Activated naive CD4-positive, alpha-beta T cell treated with anti-CD3 and anti-CD28 coated beads for 36 hours (primary cell): ENCODE measurements at regions of chr3 and their contacts with region 1.

Region 1: DNA sequence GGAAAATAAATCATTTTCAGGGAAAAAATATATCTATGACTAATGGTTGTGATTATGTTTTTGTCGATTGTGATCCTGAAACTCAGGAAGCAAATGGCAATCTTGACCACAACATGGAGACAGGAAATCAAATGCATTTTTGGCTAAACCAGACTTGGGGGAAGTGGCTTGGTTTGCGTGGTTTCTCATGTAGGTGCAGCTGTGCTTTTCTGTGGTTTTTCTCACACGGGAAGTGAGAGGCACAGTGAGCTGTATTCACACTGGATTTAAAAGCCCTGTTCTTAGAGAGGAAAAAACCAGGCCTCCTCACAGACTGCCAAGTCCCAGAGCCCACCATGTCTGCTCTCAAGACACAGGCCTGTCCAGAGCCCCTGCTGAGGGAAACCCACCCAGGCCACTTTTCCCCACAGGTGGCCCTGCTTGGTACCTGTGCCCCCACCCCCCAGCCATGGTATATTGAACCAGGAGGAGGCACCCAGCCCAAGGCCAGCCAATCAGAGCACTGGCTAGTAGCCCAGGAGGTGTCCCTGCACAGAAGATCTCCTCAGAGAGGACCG is 46.1 kb downstream of the BTD start:
- DNase-seq: peak; percentile 87
- H3K4me3 Mint-ChIP-seq: peak overlapping the region; percentile 36
- H3K27ac Mint-ChIP-seq: peak overlapping the region; percentile 76
- H3K4me1 Mint-ChIP-seq: peaks cover 35% of the 10 kb centered on the region
- H3K27me3 Mint-ChIP-seq: peaks cover 4% of the 10 kb centered on the region

Region 2: GRCh38 chr3:15601397-15602145 is 46.1 kb before region 1 on chr3 and contains the starts of genes BTD and HACL1:
- CTCF ChIA-PET with region 1: no interaction called
- intact Hi-C with region 1: loop called (anchors 1 kb)
- DNase-seq: peak; percentile 99
- H3K4me3 Mint-ChIP-seq: peak within 1 kb of the TSS; percentile 99
- H3K27ac Mint-ChIP-seq: peak within 1 kb of the TSS; percentile 96
- H3K4me1 Mint-ChIP-seq: peaks cover 46% of the 10 kb centered on the region
- H3K27me3 Mint-ChIP-seq: no peaks in the 10 kb centered on the region
- total RNA-seq, gene BTD: 8.7 to 9.7 TPM
- total RNA-seq, gene HACL1: 25.3 to 26.5 TPM

Region 3: DNA sequence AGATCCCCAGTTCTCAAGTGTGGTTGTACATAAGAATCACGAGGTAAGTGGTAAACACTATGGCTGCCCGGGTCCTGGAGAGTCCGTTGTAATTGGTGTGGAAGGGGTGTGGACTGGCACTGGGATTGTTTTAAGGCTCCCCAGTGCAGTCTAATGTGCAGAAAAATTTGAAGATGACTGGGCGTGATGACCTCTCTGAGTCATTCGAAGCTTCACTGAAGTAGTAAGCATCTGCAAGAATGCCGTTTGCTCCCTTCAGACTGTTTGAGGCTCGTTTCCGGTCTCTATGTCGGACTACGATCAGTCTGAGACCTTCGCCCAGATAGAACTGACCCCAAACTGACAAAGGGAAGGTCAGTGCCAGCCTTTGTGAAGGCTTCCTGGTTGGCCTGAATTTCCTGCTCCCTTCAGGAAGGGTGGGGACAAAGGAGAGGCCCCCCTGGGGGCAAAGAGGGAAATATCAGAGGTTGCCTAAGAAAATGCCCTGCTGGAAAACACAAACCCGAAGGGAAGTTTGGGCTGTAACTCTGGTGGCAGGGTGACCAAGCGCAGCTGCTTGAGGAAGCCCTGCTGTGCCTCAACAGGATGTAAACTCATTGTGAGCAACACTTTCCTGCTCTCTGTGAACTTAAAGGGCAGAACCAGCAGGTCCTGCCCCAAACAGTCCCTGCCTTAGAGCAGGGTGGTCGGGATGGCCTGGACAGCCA is 11.5 kb before region 1 on chr3:
- CTCF ChIA-PET with region 1: interaction called, 5 read pairs
- intact Hi-C with region 1: loop called (anchors 1 kb)
- DNase-seq: peak; percentile 74
- H3K4me3 Mint-ChIP-seq: no peak overlapping the region
- H3K27ac Mint-ChIP-seq: peak overlapping the region; percentile 69
- H3K4me1 Mint-ChIP-seq: peaks cover 52% of the 10 kb centered on the region
- H3K27me3 Mint-ChIP-seq: no peaks in the 10 kb centered on the region

Region 4: GRCh38 chr3:15694628-15695027 is 46.9 kb after region 1 on chr3:
- CTCF ChIA-PET with region 1: no interaction called
- intact Hi-C with region 1: no loop called
- DNase-seq: no peak
- H3K4me3 Mint-ChIP-seq: no peak overlapping the region
- H3K27ac Mint-ChIP-seq: no peak overlapping the region
- H3K4me1 Mint-ChIP-seq: peaks cover 2% of the 10 kb centered on the region
- H3K27me3 Mint-ChIP-seq: no peaks in the 10 kb centered on the region

Region 5: GRCh38 chr3:15743587-15744009 is 95.9 kb after region 1 on chr3:
- CTCF ChIA-PET with region 1: no interaction called
- intact Hi-C with region 1: loop called (anchors 1 kb)
- DNase-seq: no peak
- H3K4me3 Mint-ChIP-seq: no peak overlapping the region
- H3K27ac Mint-ChIP-seq: no peak overlapping the region
- H3K4me1 Mint-ChIP-seq: peaks cover 37% of the 10 kb centered on the region
- H3K27me3 Mint-ChIP-seq: no peaks in the 10 kb centered on the region

Region 6: DNA sequence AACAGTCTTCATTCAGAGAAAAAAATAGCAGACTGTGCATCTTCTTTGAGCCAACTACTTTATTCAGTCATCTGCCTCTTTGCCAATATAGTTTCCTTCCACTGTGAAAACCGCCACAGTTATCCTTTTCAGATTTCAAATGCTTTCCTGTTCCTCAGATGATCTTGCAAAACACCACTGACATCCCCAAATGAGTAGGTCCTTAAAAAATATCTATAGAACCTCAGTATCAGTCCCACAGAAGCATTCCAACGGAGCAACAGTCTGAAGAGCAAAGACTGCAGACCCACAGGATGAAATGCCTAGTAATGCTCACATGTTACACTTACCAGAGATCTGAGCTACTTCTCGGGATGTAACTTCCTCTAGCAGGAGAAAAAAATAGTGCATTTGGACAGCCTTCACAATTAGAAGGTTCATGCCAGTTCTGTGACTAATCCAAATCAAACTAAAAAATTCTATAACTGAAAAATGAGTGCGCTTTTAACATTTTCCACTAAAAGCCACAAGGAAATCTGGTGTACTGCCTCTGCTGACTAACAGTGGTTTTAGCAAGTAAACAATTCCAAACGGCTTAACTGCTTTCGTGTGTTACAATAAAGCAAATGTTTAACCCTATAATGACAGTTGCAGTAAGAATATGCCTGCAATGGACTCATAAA is 150.1 kb after region 1 on chr3 and contains the start of gene ANKRD28:
- CTCF ChIA-PET with region 1: interaction called, 3 read pairs
- intact Hi-C with region 1: loop called (anchors 1 kb)
- DNase-seq: no peak
- H3K4me3 Mint-ChIP-seq: peak within 1 kb of the TSS; percentile 33
- H3K27ac Mint-ChIP-seq: peak within 1 kb of the TSS; percentile 48
- H3K4me1 Mint-ChIP-seq: peaks cover 70% of the 10 kb centered on the region
- H3K27me3 Mint-ChIP-seq: no peaks in the 10 kb centered on the region
- total RNA-seq, gene ANKRD28: 21.4 to 23.6 TPM